Activated T-helper 2 cell treated with anti-CD3 and anti-CD28 coated beads, Interferon-gamma antibody, Interleukin-2, Interleukin-4, amounts not matched to agents 10 μg/mL and 5 μg/mL and 100 μg/mL, durations not matched to agents 14 hours and 24 hours and 36 hours (primary cell): ENCODE measurements at regions of chr2 and their contacts with region 1.

Region 1: GRCh38 chr2:223760838-223761502 is 76.4 kb downstream of the AP1S3 start:
- DNase-seq: peak; percentile 68
- H3K4me3 Mint-ChIP-seq: peak overlapping the region; percentile 61
- H3K27ac Mint-ChIP-seq: peak overlapping the region; percentile 92
- H3K4me1 Mint-ChIP-seq: peaks cover 40% of the 10 kb centered on the region
- H3K27me3 Mint-ChIP-seq: no peaks in the 10 kb centered on the region

Region 2: GRCh38 chr2:223697892-223698645 is 62.9 kb before region 1 on chr2:
- intact Hi-C with region 1: loop called (anchors 1 kb)
- DNase-seq: no peak
- H3K4me3 Mint-ChIP-seq: no peak overlapping the region
- H3K27ac Mint-ChIP-seq: no peak overlapping the region
- H3K4me1 Mint-ChIP-seq: peaks cover 23% of the 10 kb centered on the region
- H3K27me3 Mint-ChIP-seq: peaks cover 6% of the 10 kb centered on the region

Region 3: GRCh38 chr2:223797811-223798721 is 37.1 kb after region 1 on chr2:
- intact Hi-C with region 1: loop called (anchors 5 kb)
- DNase-seq: no peak
- H3K4me3 Mint-ChIP-seq: no peak overlapping the region
- H3K27ac Mint-ChIP-seq: no peak overlapping the region
- H3K4me1 Mint-ChIP-seq: peaks cover 13% of the 10 kb centered on the region
- H3K27me3 Mint-ChIP-seq: peaks cover 2% of the 10 kb centered on the region

Region 4: DNA sequence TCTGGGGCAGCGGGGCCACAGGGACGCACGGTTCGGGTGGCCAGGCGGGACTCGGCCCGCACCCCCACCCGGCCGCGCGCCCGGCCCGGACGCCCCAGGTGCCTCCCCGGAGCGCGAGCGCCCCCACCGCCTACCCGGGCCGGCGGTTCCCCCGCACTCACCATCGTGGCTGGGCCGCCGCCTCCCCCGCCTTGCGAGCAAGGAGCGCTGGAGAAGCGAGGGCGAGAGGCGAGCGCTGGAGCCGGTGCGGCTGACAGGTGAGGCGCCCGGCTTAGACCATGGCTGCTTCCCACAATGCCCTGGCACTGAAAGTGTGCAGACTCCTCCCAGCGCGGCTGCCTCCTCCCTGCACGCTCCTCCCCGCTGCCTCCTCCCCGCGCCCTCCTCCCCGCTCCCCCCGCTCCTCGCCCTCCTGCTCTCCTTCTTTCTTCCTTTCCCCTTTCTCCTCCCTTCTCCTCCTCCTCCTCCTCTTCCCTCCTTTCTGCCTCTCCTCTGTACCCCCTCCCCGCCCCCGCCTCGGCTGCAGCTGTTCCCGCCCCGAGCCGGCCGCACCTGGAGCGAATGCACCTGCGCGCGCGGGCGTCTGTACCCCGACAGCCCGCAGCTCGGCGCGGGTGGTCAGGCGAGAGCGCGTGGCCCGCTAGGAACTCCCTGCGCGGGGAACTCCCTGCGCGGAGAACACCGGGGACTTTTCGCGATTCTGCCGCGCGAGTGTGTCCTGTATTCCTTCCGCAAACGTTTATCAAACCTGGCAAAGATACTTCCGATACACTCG is 76.5 kb after region 1 on chr2 and contains the start of gene AP1S3:
- intact Hi-C with region 1: loop called (anchors 1 kb)
- DNase-seq: peak; percentile 67
- H3K4me3 Mint-ChIP-seq: peak within 1 kb of the TSS; percentile 92
- H3K27ac Mint-ChIP-seq: peak within 1 kb of the TSS; percentile 82
- H3K4me1 Mint-ChIP-seq: peaks cover 17% of the 10 kb centered on the region
- H3K27me3 Mint-ChIP-seq: no peaks in the 10 kb centered on the region
- total RNA-seq, gene AP1S3: 12.7 and 13.9 TPM in 2 replicates

Region 5: DNA sequence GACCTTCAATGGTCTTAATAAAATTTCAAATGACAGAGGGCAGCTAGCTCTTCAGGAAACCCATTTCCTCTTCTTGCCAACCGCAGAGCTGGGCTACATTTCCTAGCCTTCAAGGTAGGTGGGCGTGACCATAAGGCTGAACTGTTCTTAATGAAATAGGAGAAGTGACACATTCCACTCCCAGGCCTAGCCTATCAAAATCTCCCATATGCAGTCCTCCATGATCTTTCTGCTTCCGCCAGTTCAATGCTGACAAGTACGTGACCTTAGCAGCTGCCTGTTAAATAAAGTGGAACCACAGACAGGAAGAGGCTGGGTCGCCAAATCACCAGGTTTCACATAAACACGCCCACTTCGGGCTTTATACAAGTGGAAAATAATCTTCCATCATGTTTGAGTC is 264.9 kb after region 1 on chr2:
- intact Hi-C with region 1: loop called (anchors 5 kb)
- DNase-seq: peak; percentile 74
- H3K4me3 Mint-ChIP-seq: peak overlapping the region; percentile 40
- H3K27ac Mint-ChIP-seq: peak overlapping the region; percentile 96
- H3K4me1 Mint-ChIP-seq: peaks cover 56% of the 10 kb centered on the region
- H3K27me3 Mint-ChIP-seq: no peaks in the 10 kb centered on the region